Activated CD8-positive, alpha-beta T cell treated with anti-CD3 and anti-CD28 coated beads, Interleukin-2, amount 10 ng/mL, durations not matched to agents 7 days and 5 days (primary cell): ENCODE measurements at regions of chr16 and their contacts with region 1.

Region 1: DNA sequence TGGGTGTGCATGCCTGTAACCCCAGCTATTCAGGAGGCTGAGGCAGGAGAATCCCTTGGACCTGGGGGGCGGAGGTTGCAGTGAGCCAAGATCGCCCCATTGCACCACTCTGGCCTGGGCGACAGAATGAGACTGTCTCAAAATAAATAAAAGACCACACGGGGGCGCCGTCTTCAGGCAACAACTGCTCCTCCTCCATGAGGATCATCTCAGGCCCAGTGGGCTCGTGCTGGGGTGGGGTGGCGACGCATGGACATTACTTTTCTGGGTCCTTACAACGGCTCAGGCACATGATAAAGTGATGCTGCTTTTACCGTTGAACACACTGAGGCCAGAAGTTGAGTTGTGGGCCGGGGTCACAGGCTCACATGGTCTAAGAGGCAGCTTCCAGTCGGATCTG is 56.2 kb downstream of the PRMT7 start:
- DNase-seq: peak; percentile 74
- ATAC-seq: peak; percentile 24
- H3K4me3 Mint-ChIP-seq: no peak overlapping the region
- H3K27ac Mint-ChIP-seq: no peak overlapping the region
- H3K4me1 Mint-ChIP-seq: peaks cover 53% of the 10 kb centered on the region
- H3K27me3 Mint-ChIP-seq: peaks cover 21% of the 10 kb centered on the region

Region 2: DNA sequence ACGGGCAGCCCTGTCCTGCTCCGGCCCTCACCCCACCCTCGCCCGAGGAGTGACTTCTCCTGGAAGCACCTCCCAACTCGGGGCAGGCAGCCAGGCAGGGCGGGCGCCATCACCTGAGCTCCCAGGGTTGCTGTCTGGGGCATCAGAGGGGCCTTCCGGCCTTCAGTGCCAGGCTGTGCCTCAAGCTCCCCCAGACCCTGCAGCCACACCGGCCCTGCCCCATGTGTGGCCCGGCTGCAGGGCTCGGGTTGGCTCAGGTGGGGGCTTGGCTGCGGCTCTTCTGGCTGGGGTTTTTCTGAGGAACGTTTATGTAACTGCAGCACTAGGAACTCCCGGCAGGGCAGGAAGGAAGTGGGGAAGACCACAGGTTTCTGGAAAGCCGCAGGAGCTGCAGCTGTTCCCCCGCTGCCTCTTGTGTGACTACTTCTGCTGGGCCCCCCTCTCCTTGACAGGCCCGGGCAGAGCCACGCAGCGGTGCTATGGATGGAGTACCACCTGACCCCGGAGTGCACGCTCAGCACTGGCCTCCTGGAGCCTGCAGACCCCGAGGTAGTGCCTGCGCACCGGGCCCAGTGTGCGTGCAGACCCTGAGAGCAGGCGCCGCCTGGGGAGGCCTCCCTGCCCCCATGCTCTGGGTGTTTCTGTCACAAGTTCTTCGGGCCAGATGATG is 10.6 kb before region 1 on chr16:
- CTCF ChIA-PET with region 1: interaction called, 34 read pairs
- POLR2A ChIA-PET with region 1: interaction called, 3 read pairs
- DNase-seq: peak; percentile 92
- ATAC-seq: peak; percentile 87
- H3K4me3 Mint-ChIP-seq: peak overlapping the region; percentile 40
- H3K27ac Mint-ChIP-seq: peak overlapping the region; percentile 75
- H3K4me1 Mint-ChIP-seq: peaks cover 48% of the 10 kb centered on the region
- H3K27me3 Mint-ChIP-seq: peaks cover 3% of the 10 kb centered on the region

Region 3: GRCh38 chr16:68382296-68382718 is 15.3 kb after region 1 on chr16:
- CTCF ChIA-PET with region 1: interaction called, 11 read pairs
- POLR2A ChIA-PET with region 1: no interaction called
- DNase-seq: peak; percentile 41
- ATAC-seq: peak; percentile 60
- H3K4me3 Mint-ChIP-seq: no peak overlapping the region
- H3K27ac Mint-ChIP-seq: no peak overlapping the region
- H3K4me1 Mint-ChIP-seq: peaks cover 18% of the 10 kb centered on the region
- H3K27me3 Mint-ChIP-seq: peaks cover 39% of the 10 kb centered on the region